ENCODE measurements at regions of chrX and their contacts with region 1.

Region 1: GRCh38 chrX:46803140-46803539 is 33.7 kb upstream of the RP2 start:
- DNase-seq: no peak
- ATAC-seq: no peak
- H3K4me3 Mint-ChIP-seq: no peak overlapping the region
- H3K27ac Mint-ChIP-seq: no peak overlapping the region
- H3K4me1 Mint-ChIP-seq: no peaks in the 10 kb centered on the region
- H3K27me3 Mint-ChIP-seq: no peaks in the 10 kb centered on the region
- CTCF ChIP-seq: no peak

Region 2: DNA sequence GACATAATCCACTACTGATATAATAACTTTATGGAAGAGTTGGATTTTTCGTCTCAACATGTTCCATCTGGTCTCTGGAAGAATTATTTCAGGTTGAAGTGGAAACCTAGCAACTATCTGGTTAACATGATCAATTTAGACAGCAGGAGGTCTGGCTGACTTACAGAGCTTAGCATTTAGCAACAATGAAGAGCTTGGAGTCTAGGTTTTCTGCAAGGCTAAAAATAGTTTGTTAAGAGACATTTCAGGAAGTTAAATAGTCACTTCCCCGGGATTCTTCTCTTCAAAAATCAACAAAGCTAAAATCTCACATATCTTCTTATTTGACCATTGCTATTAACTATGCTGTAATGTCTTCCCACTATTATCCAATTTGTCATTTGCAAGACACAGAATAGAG is 1183.8 kb before region 1 on chrX:
- CTCF ChIA-PET with region 1: no interaction called
- POLR2A ChIA-PET with region 1: no interaction called
- intact Hi-C with region 1: no loop called
- DNase-seq: no peak
- ATAC-seq: no peak
- H3K4me3 Mint-ChIP-seq: no peak overlapping the region
- H3K27ac Mint-ChIP-seq: no peak overlapping the region
- H3K4me1 Mint-ChIP-seq: no peaks in the 10 kb centered on the region
- H3K27me3 Mint-ChIP-seq: no peaks in the 10 kb centered on the region
- CTCF ChIP-seq: no peak

Region 3: DNA sequence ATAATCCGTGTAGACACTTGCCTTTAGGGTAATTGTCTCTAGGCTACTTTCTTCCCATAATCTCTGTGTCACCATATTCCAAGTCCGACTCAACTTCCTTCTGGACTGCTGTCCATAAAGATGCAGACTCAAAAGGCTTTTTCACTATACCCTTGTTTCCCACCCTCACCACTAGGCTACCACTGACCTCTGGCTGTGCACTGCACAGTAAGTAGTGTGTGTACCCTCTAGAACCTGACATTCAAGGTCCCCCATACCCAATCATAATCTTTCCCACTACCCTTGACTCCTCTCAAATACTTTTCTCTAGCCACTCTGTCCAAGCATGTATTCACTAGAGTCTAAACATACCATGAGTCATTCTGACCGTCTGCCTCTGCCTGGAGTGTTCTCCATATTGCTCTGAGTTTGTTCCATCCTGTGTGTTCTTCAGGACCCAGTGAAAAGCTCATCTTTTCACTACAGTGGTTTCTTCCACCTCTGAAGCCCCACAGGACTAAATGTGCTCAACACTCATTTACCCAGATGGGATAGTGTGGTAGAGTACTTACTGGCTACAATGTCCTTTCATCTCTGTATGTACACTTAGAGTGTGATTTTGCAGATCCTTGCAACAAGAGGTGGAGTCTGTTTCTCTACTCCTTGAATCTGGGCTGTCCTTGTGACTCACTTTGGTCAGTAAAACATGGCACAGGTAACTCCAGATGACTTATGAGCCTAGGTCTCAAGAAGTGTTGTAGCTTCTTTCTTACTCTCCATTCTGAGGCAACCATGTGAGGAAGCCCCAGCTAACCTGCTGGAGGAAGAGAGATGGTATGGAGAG is 126.5 kb after region 1 on chrX:
- CTCF ChIA-PET with region 1: no interaction called
- POLR2A ChIA-PET with region 1: no interaction called
- intact Hi-C with region 1: no loop called
- DNase-seq: no peak
- ATAC-seq: no peak
- H3K4me3 Mint-ChIP-seq: no peak overlapping the region
- H3K27ac Mint-ChIP-seq: peak overlapping the region; percentile 10
- H3K4me1 Mint-ChIP-seq: peaks cover 43% of the 10 kb centered on the region
- H3K27me3 Mint-ChIP-seq: no peaks in the 10 kb centered on the region
- CTCF ChIP-seq: no peak

Region 4: GRCh38 chrX:47030339-47030738 is 227.2 kb after region 1 on chrX:
- CTCF ChIA-PET with region 1: no interaction called
- POLR2A ChIA-PET with region 1: no interaction called
- intact Hi-C with region 1: loop called (anchors 5 kb)
- DNase-seq: no peak
- ATAC-seq: no peak
- H3K4me3 Mint-ChIP-seq: no peak overlapping the region
- H3K27ac Mint-ChIP-seq: no peak overlapping the region
- H3K4me1 Mint-ChIP-seq: peaks cover 6% of the 10 kb centered on the region
- H3K27me3 Mint-ChIP-seq: no peaks in the 10 kb centered on the region
- CTCF ChIP-seq: no peak

Region 5: DNA sequence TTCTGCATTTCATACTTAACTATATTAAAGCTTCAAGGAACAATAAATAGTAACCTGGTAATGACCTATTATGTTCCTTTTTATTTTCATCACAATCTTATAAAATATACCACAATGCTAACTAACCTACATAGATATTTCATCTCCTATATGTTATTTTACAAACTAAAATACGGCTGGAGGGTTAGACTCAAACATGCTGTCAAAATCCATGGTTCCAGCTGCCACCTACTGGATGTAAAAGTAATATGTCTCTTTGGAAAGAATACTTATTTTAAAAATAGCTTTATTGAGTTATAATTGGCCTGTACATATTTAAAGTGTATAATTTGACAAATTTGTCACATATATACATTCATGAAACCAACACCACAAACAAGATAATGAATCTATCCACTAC is 290.1 kb after region 1 on chrX:
- CTCF ChIA-PET with region 1: no interaction called
- POLR2A ChIA-PET with region 1: no interaction called
- intact Hi-C with region 1: loop called (anchors 5 kb)
- DNase-seq: no peak
- ATAC-seq: no peak
- H3K4me3 Mint-ChIP-seq: no peak overlapping the region
- H3K27ac Mint-ChIP-seq: no peak overlapping the region
- H3K4me1 Mint-ChIP-seq: no peaks in the 10 kb centered on the region
- H3K27me3 Mint-ChIP-seq: no peaks in the 10 kb centered on the region
- CTCF ChIP-seq: no peak

Measured in activated B cell treated with CpG ODN at 0.5 μM for 24 hours (primary cell).